Right ventricle myocardium inferior (tissue), 1 donor: ENCODE measurements at regions of chr11 and their contacts with region 1.

Region 1: GRCh38 chr11:130827451-130828377 is 88.6 kb downstream of the SNX19 start:
- DNase-seq: no peak
- ATAC-seq: peak; percentile 78

Region 2: GRCh38 chr11:130522284-130522961 is 305.3 kb before region 1 on chr11:
- intact Hi-C with region 1: loop called (anchors 2 kb)
- DNase-seq: peak; percentile 94
- ATAC-seq: peak; percentile 91

Region 3: GRCh38 chr11:130653838-130654636 is 173.7 kb before region 1 on chr11:
- intact Hi-C with region 1: loop called (anchors 5 kb)
- DNase-seq: peak; percentile 90
- ATAC-seq: peak; percentile 95

Region 4: DNA sequence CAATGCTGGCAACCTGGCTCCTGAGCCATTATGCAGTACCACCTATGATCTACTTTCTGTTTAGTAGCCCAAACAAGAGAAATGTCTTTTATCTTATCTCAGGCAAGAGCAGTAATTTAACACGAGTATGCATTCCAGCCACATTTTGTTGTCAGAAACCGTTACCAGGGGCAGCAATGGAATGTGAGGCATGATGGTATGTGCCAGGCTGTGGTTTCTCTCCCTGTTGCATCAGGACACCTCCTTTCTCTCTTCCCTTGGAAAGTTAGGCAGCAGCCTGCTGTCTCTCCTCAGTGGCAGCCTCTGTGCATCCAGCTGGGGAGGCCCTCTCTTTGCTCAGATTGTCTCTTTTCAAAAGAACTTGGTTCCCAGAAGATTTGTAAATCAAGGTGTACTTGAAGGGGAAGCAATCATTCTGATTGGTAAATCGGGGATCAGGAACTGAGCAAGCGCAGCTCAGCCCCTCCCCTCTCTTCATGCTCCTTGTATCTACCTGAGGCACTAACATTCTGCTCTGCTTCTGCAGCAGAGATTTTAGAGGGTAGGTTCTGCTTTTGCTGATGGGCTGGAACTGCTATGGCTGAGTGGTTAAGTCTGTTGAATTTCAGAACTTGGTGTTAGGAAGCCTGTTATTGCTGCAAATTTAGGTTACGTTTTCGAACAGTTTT is 150.1 kb before region 1 on chr11:
- intact Hi-C with region 1: loop called (anchors 2 kb)
- DNase-seq: no peak
- ATAC-seq: peak; percentile 69

Region 5: GRCh38 chr11:130726234-130727037 is 101.3 kb before region 1 on chr11:
- intact Hi-C with region 1: loop called (anchors 5 kb)
- DNase-seq: no peak
- ATAC-seq: peak; percentile 90

Region 6: DNA sequence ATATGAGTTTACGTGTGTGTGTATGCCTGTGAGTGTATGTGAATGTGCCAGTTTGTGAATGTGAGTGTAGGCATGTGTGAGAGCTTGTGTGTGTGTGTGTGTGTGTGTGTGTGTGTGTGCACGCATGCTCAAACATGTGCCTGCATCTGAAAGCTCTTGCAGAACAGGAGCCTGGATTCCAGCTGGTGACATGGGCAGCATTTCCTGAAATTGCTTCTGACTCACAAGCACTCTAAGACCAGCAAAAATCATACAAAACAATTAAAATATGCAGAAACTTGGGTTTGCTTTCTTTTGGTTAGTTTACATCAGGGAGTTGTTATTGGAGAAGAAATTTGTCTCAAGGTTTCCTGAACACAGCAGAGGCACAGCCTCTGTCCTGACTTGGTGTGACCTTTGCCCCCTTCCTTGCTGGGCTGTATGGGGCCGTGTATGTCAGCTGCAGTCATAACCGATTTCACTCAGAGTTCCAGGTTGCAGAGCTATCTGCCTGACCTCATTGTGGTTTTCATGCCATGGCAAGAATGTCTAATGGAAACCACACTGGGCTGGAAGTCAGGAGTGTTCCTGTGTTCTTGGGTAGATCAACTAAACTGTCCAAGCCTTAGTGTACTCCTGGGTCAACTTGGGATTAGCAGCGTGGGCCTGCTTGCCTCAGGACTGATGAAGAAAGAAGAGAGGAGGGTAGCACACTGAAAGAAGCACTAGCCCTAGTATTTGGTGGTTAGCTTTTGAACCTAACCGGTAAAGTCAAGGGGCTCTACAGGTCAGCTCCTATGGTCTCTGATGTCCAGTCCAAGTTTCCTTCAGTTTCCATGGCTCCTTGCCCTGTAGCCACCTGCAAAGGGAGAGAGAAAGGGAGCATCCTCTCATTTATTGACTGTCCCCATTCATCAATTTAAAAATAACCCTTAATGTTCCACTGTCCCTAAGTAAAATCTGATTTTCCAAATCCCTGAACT is 55.2 kb before region 1 on chr11:
- intact Hi-C with region 1: no loop called
- DNase-seq: no peak
- ATAC-seq: peak; percentile 27

Region 7: GRCh38 chr11:130782361-130783221 is 45.1 kb before region 1 on chr11:
- intact Hi-C with region 1: loop called (anchors 5 kb)
- DNase-seq: no peak
- ATAC-seq: peak; percentile 72

Region 8: DNA sequence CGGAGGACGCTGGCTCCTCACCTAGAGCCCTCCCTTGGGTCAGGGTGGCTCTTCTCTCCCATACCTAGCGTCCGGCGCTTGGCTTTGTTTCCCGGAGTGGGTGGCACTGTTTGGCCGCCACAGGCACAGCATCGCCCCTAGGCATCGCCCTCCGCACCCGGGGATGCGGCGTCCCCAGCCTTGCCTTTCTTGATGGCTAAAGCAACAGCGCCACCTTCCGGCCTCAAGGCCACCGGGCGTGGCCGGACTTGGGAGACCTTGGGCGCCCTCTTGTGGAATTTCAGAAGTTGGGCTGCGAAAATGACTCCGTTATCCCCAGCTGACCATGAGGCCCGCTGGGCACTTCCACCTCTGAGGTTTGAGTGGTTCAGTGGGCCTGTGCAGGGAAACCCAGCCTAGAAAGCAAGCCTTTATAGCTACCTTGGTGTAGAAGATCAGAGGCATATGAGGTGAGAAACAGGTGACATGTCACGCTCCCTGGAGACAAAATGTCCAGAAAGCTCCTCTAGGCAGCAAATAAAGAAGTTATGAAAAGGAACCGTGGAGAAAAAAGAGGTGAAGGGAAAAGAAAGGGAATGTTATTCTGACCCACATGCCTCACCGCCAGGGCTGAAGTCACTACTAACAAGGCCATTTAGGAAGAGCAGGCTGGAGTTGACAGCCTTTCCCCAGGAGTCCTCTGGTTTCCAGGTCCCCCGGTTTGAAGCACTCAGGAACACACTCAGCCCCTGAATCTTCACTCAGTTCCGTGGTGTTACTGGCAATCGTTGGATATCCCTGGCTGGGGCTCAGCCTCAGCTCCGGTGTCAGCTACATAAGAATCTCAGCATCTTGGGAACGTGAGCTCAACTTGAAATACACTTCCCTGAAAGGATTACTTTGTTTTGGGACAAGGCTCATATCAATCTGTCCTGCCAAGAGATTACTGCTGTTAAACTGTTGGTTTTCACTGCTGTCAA is 34.5 kb after region 1 on chr11:
- intact Hi-C with region 1: loop called (anchors 2 kb)
- DNase-seq: peak; percentile 96
- ATAC-seq: peak; percentile 66

Region 9: GRCh38 chr11:130894322-130895025 is 66.8 kb after region 1 on chr11:
- intact Hi-C with region 1: no loop called
- DNase-seq: peak; percentile 81
- ATAC-seq: peak; percentile 29